ENCODE measurements at regions of chr19 and their contacts with region 1.

Region 1: DNA sequence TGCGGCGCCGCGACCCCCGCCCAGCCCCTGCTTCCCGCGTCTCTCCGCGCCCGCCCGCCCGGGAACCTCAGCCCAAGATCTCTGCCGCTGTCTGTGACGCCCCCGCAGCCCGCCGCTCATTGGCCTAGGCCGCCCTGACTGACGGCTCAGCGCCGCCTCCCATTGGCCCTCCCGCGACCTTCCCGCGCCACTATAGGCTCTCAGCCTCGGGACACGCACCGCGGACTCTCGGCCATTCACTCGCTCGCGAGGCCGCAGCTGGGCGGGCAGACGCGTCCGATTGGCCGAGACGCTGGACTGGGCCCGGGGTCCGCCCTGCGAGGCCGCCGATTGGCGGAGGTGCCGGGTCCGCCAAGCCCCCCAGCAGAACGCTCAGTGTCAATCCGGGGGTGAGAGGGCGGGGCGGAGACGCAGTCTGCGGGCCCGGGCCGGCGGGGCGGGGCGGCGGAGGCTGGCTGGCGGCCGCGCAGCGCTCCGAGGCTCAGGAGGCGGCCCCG is at the start of gene PRKACA:
- DNase-seq: peak; percentile 99 to 100
- ATAC-seq: peak; percentile 96
- H3K4me3 ChIP-seq: peak within 1 kb of the TSS; percentile 81 to 94
- H3K27ac ChIP-seq: peak within 1 kb of the TSS; percentile 94 to 97
- H3K4me1 ChIP-seq: no peaks in the 10 kb centered on the region
- H3K27me3 ChIP-seq: no peaks in the 10 kb centered on the region
- total RNA-seq, gene PRKACA: 123 to 125 TPM

Region 2: DNA sequence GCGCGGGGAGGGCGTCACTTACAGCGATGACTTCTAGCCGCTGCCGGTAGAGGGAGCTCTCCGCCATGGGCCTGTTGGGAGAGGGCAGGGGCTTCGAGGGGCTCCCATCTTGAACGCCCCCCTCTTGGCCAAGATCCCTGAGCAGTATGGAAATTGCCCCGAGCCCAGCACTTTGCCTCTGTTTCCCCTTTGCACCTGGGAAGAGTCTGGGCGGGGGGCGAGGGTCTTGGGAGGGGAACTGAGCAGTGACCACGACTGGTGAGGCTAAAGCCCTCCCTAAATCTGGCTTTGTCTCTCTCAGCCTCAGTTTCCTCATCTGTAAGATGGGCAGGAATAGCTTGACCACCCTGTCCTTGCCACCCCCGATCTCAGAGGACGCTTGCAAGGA is 58.6 kb before region 1 on chr19:
- intact Hi-C with region 1: no loop called
- DNase-seq: no peak
- ATAC-seq: no peak
- H3K4me3 ChIP-seq: no peak overlapping the region
- H3K27ac ChIP-seq: no peak overlapping the region
- H3K4me1 ChIP-seq: no peaks in the 10 kb centered on the region
- H3K27me3 ChIP-seq: no peaks in the 10 kb centered on the region

Region 3: DNA sequence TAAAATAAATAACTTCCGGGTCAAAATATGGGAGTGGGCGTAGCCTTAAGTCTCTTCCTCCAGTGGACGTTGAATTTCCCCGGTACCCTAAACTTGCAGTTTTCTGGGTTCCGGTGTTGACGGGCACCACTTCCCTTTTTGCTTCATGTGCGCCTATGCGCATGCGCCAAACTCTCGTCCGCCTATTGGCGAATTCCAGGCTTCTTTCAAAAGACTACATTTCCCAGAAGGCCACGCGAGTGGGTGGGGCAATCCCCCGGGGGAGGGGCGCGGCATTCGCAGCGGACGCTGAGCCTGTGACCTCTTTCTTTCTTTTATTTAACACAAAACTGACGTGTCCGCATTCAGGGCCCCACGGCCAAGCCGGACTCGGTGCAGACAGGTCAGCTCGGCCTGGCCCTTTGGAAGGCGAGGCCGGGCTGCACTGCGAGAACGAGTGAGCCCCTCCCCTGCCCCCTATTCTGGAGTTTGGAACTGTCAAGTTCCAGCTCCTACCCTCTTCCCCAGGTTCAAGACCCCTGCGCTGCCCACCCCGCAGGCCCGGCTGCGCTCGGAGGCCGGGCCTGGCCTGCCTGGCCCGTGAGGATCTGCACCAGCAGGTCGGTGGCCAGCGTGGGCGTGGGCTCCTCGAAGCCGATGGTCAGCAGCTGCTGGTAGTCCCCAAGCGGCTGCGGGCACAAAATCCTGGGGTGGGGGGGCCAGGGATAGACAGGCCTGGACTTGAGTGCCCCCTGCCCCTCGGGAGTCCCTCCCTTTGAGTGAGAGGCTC is 36.2 kb before region 1 on chr19:
- intact Hi-C with region 1: loop called (anchors 5 kb)
- DNase-seq: peak; percentile 99 to 100
- ATAC-seq: peak; percentile 96
- H3K4me3 ChIP-seq: peak overlapping the region; percentile 68 to 80
- H3K27ac ChIP-seq: peak overlapping the region; percentile 28 to 80
- H3K4me1 ChIP-seq: no peaks in the 10 kb centered on the region
- H3K27me3 ChIP-seq: no peaks in the 10 kb centered on the region

Region 4: DNA sequence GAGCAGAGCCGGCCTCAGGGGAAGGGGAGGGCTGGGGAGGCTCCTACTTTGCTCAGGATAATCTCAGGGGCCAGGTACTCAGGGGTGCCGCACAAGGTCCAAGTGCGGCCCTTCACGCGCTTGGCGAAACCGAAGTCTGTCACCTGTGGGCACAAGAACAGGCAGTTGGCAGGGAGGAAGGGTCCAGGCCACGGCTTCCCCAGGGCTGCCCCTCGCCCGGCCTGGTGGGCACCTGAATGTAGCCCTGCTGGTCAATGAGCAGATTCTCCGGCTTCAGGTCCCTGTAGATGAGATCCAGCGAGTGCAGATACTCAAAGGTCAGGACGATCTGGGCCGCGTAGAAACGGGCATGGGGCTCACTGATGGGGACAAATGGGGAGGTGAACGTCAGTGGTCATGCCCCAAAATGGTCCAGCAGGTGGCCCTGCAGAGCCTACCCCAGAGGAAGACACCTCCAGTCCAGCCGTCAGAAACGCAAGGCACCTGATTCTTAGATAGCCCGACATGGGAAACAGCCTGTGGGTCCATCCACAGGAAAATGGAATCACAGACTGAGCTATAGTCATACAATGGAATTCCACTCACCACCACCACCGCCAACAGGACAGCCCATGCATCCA is 20.1 kb before region 1 on chr19:
- intact Hi-C with region 1: loop called in 1 of 2 experiments (anchors 2 kb)
- DNase-seq: no peak
- ATAC-seq: no peak
- H3K4me3 ChIP-seq: no peak overlapping the region
- H3K27ac ChIP-seq: no peak overlapping the region
- H3K4me1 ChIP-seq: no peaks in the 10 kb centered on the region
- H3K27me3 ChIP-seq: no peaks in the 10 kb centered on the region

Region 5: DNA sequence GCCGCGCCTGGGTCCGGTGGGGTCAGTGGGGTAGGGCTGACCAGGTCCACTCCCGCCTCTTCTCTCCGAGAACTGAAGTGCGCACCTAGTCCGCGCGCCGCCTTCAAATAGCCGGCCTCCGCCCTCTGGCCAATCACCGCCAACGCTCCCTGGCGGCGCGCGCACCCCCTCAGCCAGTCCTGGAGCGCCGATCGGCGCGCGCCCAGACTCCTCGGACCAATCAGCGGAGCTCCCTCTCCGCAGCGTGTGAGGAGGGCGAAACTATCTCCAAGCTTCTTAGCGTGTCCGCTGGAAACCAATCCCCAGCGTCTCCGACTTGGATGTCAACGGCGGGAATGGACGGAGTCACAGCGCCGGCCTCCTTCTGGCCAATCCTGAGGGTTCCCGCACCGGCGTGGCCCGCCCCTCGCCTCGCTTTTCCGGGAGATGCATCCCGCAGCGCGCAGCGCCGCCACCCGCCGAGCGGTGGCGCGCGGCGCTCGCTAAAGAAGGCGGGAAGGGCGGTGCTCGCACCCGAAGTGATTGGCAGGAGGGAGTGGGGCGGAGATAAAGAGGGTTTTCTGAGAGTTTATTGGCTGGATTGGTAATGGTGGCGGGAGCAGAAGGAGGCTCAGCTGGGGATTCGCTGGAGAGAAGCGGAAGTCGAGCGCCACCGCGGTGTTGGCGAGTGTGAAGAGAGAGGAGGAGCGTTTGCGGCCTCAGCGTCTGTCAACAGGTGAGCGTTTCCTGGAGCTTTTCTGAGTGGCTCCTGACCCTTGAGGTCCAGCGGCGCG is 19.0 kb after region 1 on chr19 and contains the start of gene ASF1B:
- intact Hi-C with region 1: no loop called
- DNase-seq: peak; percentile 99 to 100
- ATAC-seq: peak; percentile 97
- H3K4me3 ChIP-seq: peak within 1 kb of the TSS; percentile 64 to 65
- H3K27ac ChIP-seq: peak within 1 kb of the TSS; percentile 57 to 80
- H3K4me1 ChIP-seq: no peaks in the 10 kb centered on the region
- H3K27me3 ChIP-seq: no peaks in the 10 kb centered on the region
- total RNA-seq, gene ASF1B: 1.4 to 2.0 TPM

Measured in aorta (tissue), 5 donors.